ENCODE measurements at regions of chr7 and their contacts with region 1.

Region 1: DNA sequence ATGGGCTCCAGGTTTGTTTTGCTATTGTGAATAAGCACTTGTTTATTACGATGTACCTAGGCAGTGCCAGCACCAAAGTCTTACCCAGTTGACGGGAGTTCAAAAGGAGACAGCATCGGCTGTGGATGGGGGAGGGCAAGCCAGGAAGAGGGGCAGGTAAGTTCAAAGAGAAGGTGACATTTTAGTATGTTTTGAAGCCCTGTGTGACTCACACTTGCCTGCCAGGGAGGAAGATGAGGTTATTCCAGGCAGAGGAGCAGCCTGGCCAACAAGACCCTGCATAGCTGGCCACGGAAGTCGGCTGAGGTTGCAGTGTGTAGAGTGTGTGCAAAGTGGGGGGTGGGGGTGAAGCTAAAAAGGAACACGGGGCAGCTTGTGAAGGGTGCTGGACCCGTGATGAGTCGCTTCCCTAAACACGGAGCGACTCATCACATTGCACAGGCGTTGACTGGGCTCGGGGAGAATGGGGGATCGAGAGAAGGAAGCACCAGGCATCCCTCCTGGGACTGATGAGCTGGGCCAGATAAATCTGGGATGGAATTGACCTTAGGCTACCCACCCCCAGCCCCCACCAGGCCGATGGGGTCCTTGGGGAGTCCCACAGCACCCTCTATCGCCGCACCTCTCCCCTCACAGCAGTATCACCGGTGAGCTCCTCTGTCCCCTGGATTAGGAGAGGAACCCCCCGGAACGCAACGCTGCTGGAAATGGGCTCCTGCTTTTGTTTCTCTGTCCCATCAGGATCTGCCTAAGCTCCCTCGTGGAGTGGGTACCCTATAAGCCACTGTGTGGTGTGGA is 97.9 kb upstream of the IKZF1 start:
- DNase-seq: peak; percentile 92
- ATAC-seq: peak; percentile 68
- H3K4me3 Mint-ChIP-seq: peak overlapping the region; percentile 60
- H3K27ac Mint-ChIP-seq: peak overlapping the region; percentile 97
- H3K4me1 Mint-ChIP-seq: peaks cover 94% of the 10 kb centered on the region
- H3K27me3 Mint-ChIP-seq: no peaks in the 10 kb centered on the region
- CTCF ChIP-seq: no peak

Region 2: GRCh38 chr7:50142425-50143017 is 64.1 kb before region 1 on chr7:
- CTCF ChIA-PET with region 1: interaction called, 15 read pairs
- POLR2A ChIA-PET with region 1: interaction called, 3 read pairs
- intact Hi-C with region 1: loop called (anchors 2 kb)
- DNase-seq: peak; percentile 56
- ATAC-seq: peak; percentile 68
- H3K4me3 Mint-ChIP-seq: peak overlapping the region; percentile 50
- H3K27ac Mint-ChIP-seq: peak overlapping the region; percentile 87
- H3K4me1 Mint-ChIP-seq: peaks cover 43% of the 10 kb centered on the region
- H3K27me3 Mint-ChIP-seq: peaks cover 3% of the 10 kb centered on the region
- CTCF ChIP-seq: peak; percentile 89

Region 3: GRCh38 chr7:50229964-50230363 is 23.3 kb after region 1 on chr7:
- CTCF ChIA-PET with region 1: interaction called, 66 read pairs
- POLR2A ChIA-PET with region 1: interaction called, 13 read pairs
- intact Hi-C with region 1: loop called (anchors 2 kb)
- DNase-seq: no peak
- ATAC-seq: no peak
- H3K4me3 Mint-ChIP-seq: no peak overlapping the region
- H3K27ac Mint-ChIP-seq: no peak overlapping the region
- H3K4me1 Mint-ChIP-seq: peaks cover 42% of the 10 kb centered on the region
- H3K27me3 Mint-ChIP-seq: no peaks in the 10 kb centered on the region
- CTCF ChIP-seq: peak; percentile 98

Region 4: DNA sequence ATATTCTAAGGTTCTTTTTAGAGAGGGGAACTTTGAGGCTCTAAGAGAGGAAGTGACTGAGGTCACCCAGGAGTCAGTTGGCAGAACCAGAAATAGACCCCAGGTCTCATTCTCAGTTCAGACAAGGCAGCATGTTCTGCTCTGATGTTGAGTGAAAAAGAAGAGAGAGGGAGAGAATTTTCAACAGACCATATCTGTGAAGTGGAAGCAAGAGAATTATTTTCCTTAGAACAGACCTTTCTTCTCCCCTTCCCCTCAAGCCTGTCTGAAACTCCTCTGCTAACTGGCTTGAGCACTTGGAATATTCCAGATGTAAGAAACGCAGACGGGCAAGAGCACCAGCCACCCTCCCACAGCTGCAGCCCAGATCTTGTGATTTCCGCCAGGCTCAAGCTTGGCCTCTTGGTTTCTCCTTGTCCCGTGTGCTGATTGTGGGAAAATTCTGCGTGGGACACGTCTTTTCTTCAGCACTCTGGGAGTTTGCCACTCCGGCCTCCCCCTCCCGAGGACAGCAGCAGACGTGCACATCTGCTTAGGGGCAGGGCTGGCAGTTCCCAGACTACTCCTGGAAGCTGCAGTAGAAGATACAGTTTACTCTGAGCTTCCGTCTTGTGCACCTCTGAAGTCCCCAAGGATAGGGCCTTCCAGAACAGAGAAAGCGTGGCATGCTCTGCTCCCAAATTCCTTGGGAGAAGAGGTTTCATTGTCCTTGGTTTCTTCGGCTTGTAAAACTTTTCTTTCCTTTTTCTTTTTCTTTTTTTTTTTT is 75.2 kb after region 1 on chr7:
- CTCF ChIA-PET with region 1: interaction called, 22 read pairs
- POLR2A ChIA-PET with region 1: interaction called, 3 read pairs
- intact Hi-C with region 1: no loop called
- DNase-seq: peak; percentile 45
- ATAC-seq: peak; percentile 78
- H3K4me3 Mint-ChIP-seq: peak overlapping the region; percentile 63
- H3K27ac Mint-ChIP-seq: peak overlapping the region; percentile 89
- H3K4me1 Mint-ChIP-seq: peaks cover 63% of the 10 kb centered on the region
- H3K27me3 Mint-ChIP-seq: no peaks in the 10 kb centered on the region
- CTCF ChIP-seq: no peak

Region 5: GRCh38 chr7:50317221-50317678 is 110.6 kb after region 1 on chr7:
- CTCF ChIA-PET with region 1: interaction called, 209 read pairs
- POLR2A ChIA-PET with region 1: interaction called, 376 read pairs
- intact Hi-C with region 1: no loop called
- DNase-seq: peak; percentile 75
- ATAC-seq: peak; percentile 82
- H3K4me3 Mint-ChIP-seq: peak overlapping the region; percentile 94
- H3K27ac Mint-ChIP-seq: peak overlapping the region; percentile 97
- H3K4me1 Mint-ChIP-seq: peaks cover 88% of the 10 kb centered on the region
- H3K27me3 Mint-ChIP-seq: no peaks in the 10 kb centered on the region
- CTCF ChIP-seq: peak; percentile 7

Region 6: GRCh38 chr7:50342616-50343114 is 136.0 kb after region 1 on chr7:
- CTCF ChIA-PET with region 1: interaction called, 31 read pairs
- POLR2A ChIA-PET with region 1: interaction called, 34 read pairs
- intact Hi-C with region 1: no loop called
- DNase-seq: peak; percentile 71
- ATAC-seq: peak; percentile 17
- H3K4me3 Mint-ChIP-seq: peak overlapping the region; percentile 69
- H3K27ac Mint-ChIP-seq: no peak overlapping the region
- H3K4me1 Mint-ChIP-seq: peaks cover 63% of the 10 kb centered on the region
- H3K27me3 Mint-ChIP-seq: no peaks in the 10 kb centered on the region
- CTCF ChIP-seq: no peak

Region 7: DNA sequence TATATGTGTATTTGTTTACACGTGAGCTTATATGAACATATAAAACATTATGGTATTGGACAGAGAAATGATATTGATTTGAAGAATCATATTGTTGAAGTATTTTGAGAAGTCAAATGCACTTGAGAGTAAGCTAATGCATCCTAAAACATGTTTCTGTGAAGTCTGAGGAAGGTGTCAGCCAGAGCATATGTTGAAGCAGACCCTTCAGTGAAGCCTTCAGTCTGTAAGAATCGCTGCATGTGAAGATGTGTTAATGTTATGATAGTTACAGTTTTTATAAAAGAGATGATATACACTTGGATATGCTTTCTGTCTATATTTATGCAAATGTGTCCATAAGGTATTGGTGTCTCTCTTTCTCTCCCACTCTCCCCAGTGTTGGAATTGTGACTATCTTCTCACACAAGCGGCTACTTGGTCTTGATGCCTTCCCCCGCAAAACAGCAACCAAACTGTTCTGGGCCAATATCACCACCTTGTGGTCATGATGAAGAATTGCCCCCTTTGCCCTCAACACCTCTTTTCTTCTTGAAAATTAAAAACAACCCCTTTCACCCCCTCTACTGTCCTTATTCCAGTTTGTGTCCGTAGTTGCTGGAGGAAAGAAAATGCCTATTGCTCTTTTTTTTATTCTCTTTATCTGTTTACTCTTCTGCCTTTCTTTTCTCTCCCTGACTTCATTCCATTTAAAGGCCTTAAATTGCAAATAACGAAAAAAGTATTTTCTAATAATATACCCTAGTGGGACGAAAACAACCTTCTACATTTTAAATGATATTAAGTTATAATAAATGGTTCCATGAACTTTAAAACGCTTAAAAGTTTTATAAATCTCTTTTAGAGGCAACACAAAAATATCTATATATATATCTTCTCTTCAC is 162.7 kb after region 1 on chr7:
- CTCF ChIA-PET with region 1: interaction called, 145 read pairs
- POLR2A ChIA-PET with region 1: interaction called, 43 read pairs
- intact Hi-C with region 1: loop called (anchors 2 kb)
- DNase-seq: peak; percentile 60
- ATAC-seq: peak; percentile 24
- H3K4me3 Mint-ChIP-seq: peak overlapping the region; percentile 5
- H3K27ac Mint-ChIP-seq: peak overlapping the region; percentile 95
- H3K4me1 Mint-ChIP-seq: peaks cover 97% of the 10 kb centered on the region
- H3K27me3 Mint-ChIP-seq: no peaks in the 10 kb centered on the region
- CTCF ChIP-seq: peak; percentile 94